Right ventricle myocardium inferior (tissue), 1 donor: ENCODE measurements at regions of chr12 and their contacts with region 1.

Region 1: DNA sequence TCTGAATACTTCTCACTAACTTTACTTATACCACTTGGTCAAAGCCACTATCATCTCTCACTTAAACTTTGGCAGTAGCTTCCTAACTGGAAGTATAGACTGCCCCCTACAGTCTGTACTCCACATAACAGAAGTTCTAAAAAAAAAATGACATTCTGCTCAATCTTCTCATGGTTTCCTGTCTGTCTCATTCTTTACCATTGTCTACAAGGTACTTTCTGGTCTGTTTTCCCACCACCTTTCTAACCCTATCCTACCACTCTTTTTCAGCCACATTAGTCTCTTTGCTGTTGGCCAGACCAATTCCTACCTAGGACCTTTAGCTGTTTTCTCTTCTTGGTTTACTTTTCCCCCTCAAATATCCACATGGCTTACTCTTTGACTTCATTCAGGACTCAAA is 14.7 kb downstream of the CPSF6 start:
- DNase-seq: no peak
- ATAC-seq: peak; percentile 64

Region 2: DNA sequence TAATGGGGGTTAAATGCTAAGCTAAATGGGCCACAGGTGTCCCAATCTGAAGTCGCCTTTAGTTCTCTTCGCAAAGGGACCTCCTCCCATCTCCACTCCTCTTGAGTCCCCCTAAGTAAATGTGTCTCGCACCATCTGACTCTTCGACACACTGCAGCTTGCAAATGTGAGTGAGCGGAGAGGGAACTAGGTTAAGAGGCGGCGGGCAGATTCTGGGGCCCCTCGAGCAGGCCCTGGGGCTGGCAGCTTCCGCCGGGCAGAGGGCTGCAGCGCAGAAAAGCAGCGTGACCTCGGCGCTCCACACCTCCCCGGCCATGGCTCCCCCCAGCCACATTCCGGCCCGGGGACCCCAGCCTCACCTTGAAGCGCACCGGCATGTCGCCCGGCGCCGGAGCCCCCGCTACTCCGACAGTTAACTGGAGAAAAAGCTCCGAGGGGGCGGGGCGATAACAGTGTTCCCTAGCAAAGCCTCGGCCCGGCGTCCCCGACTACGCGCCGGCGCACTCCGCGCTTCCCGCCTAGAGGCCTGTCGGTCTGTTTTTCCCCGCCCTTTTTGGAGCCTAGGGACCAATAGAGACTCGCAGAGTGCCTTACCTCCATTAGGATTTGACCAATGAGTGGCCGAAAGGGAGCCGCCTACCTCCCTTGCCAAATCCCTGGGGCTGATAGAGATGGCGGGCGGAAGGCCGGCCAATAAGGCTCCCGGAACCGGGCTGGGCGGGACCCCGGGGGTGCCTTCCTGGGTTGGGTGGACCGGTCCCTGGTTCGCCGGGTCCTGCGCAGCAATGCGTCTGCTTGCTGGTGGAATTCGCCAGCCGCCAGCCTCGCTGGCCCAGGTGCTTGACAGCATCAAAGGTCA is 921.9 kb before region 1 on chr12 and contains the start of gene MDM1:
- intact Hi-C with region 1: loop called (anchors 10 kb)
- DNase-seq: peak; percentile 98
- ATAC-seq: peak; percentile 100
- total RNA-seq, gene MDM1: 7.4 TPM

Region 3: DNA sequence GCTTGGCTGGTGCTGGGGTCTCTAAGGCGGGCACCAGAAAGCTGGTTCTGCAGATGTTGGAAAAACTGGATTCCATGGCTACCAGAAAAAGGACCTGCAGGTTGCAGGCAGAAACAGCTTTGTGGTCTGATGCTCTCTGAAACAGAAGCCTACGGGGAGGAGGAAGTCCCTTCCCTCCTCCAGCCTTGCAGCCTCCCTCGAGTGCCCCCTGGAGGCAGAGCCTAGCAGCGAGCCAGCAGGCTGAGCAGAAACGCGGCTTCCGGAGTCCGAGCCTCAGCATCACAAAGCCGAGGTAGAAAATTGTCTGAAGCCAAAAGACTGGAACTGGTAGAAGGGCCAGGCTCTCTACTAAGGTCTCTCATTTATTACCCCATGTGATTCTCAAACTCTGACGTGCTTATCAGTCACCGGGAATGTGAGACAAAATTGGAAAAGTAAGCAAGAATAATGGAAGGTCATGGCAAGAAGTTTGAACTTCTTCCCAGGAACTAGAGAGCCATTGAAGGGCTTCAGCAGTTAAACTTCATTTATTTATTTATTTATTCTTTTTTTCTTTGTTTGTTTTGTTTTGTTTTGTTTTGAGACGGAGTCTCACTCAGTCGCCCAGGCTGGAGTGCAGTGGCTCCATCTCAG is 96.9 kb before region 1 on chr12:
- intact Hi-C with region 1: loop called (anchors 1 kb)
- DNase-seq: peak; percentile 92
- ATAC-seq: peak; percentile 87

Region 4: GRCh38 chr12:69405466-69405865 is 151.4 kb after region 1 on chr12:
- intact Hi-C with region 1: no loop called
- DNase-seq: no peak
- ATAC-seq: no peak